Breast epithelium (tissue), 4 donors: ENCODE measurements at regions of chr18 and their contacts with region 1.

Region 1: GRCh38 chr18:50830544-50830943 is 10.7 kb upstream of the MRO start:
- DNase-seq: no peak
- H3K4me3 ChIP-seq: no peak overlapping the region
- H3K27ac ChIP-seq: no peak overlapping the region
- H3K4me1 ChIP-seq: no peaks in the 10 kb centered on the region
- H3K27me3 ChIP-seq: no peaks in the 10 kb centered on the region
- CTCF ChIP-seq: no peak
- POLR2A ChIP-seq: no peak

Region 2: GRCh38 chr18:50307738-50308470 is 522.6 kb before region 1 on chr18:
- intact Hi-C with region 1: loop called (anchors 5 kb)
- DNase-seq: peak; percentile 73 to 76
- H3K4me3 ChIP-seq: peak overlapping the region; percentile 40 to 67 (median 57)
- H3K27ac ChIP-seq: peak overlapping the region; percentile 11 to 64
- H3K4me1 ChIP-seq: no peaks in the 10 kb centered on the region
- H3K27me3 ChIP-seq: peaks cover 0 to 1% of the 10 kb centered on the region in 2 donors
- CTCF ChIP-seq: no peak
- POLR2A ChIP-seq: no peak

Region 3: DNA sequence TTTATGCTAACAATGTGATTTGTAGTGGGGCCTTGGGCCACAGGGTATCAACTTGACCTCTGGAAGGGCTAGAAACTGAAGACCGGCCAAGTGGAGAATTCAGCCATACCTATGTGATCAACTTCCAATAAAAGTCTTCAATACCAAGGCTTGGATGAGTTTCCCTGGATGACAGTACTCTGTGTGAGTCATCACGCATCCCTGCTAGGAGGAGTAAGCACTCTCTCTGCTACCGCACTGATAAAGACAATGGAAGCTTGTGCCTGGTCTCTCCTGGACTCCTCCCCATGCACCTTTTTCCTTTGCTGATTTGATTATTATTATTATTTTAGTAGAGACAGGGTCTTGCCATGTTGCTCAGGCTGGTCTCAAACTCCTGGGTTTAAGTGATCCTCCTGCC is 397.6 kb before region 1 on chr18:
- intact Hi-C with region 1: no loop called
- DNase-seq: no peak
- H3K4me3 ChIP-seq: no peak overlapping the region
- H3K27ac ChIP-seq: no peak overlapping the region
- H3K4me1 ChIP-seq: no peaks in the 10 kb centered on the region
- H3K27me3 ChIP-seq: no peaks in the 10 kb centered on the region
- CTCF ChIP-seq: no peak
- POLR2A ChIP-seq: no peak

Region 4: GRCh38 chr18:50862401-50862800 is 31.9 kb after region 1 on chr18:
- intact Hi-C with region 1: no loop called
- DNase-seq: no peak
- H3K4me3 ChIP-seq: no peak overlapping the region
- H3K27ac ChIP-seq: no peak overlapping the region
- H3K4me1 ChIP-seq: no peaks in the 10 kb centered on the region
- H3K27me3 ChIP-seq: no peaks in the 10 kb centered on the region
- CTCF ChIP-seq: no peak
- POLR2A ChIP-seq: no peak